AG04450 (cell line): ENCODE measurements at regions of chr12 and their contacts with region 1.

Region 1: GRCh38 chr12:21697904-21698630 is 40.4 kb upstream of the LDHB start:
- DNase-seq: peak; percentile 11
- H3K4me3 ChIP-seq: no peak overlapping the region
- H3K27ac ChIP-seq: no peak overlapping the region
- H3K27me3 ChIP-seq: no peaks in the 10 kb centered on the region
- CTCF ChIP-seq: peak; percentile 60

Region 2: DNA sequence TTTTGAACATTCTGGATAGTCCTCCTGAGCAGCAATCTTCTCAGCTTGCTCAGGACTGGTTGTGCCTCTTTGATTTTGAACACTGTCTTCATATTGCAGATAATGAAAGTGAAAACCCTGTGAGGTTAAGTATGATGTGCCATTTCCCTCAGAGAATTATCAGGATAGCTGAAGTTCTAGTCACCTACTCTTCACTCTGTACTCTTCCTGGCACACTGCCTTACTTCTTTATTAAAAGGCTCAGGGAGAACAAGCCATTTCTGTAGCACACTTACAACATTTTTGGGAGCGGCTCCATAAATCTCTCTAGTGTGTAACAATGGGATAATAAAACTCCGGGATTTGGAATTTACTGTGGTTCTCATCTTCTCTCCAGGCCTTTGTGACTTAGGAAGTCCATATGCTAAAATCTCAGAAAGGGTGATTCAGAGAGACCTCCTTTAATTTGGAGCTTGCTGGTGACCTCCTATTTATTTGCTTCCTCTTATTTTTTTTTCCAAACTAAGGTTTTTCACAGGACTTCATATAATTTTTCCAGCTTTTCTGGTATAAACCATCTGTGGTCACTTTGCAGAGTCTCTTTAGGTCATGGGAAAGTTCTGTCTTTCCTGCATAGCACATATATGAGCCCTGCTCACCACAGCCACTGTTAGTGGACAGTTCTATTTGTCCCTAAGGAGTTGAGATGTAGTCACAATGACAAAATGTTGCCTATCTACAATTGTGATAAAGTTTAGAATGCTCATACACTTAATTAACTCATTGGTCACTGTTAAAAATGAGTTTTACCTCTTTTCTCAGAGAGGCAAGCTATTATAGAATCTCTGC is 13.1 kb after region 1 on chr12:
- CTCF ChIA-PET with region 1: interaction called, 40 read pairs
- POLR2A ChIA-PET with region 1: no interaction called
- DNase-seq: no peak
- H3K4me3 ChIP-seq: no peak overlapping the region
- H3K27ac ChIP-seq: no peak overlapping the region
- H3K27me3 ChIP-seq: no peaks in the 10 kb centered on the region
- CTCF ChIP-seq: no peak

Region 3: DNA sequence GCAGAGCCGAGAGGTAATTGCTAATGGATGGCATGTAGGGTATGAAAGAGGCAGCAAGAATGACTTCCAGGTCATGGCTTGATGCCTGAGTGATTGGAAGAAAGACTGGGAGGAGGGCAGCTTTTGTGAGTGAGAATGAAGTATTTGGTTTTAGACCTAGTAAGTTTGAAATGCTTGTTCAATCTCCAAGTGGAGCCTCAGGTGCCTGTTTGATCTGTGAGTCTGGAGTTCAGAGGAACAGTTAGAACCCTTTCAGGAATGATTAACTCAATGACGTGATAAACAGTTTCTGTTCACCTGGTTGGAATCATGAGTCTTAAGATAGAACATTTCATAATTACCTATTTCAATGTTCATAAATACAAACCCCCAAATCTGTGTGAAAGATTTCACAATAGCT is 66.0 kb after region 1 on chr12:
- CTCF ChIA-PET with region 1: no interaction called
- POLR2A ChIA-PET with region 1: no interaction called
- DNase-seq: no peak
- H3K4me3 ChIP-seq: no peak overlapping the region
- H3K27ac ChIP-seq: no peak overlapping the region
- H3K27me3 ChIP-seq: no peaks in the 10 kb centered on the region
- CTCF ChIP-seq: no peak

Region 4: GRCh38 chr12:21980544-21980943 is 282.5 kb after region 1 on chr12:
- CTCF ChIA-PET with region 1: interaction called, 450 read pairs
- POLR2A ChIA-PET with region 1: no interaction called
- DNase-seq: no peak
- H3K4me3 ChIP-seq: no peak overlapping the region
- H3K27ac ChIP-seq: no peak overlapping the region
- H3K27me3 ChIP-seq: no peaks in the 10 kb centered on the region
- CTCF ChIP-seq: no peak

Region 5: DNA sequence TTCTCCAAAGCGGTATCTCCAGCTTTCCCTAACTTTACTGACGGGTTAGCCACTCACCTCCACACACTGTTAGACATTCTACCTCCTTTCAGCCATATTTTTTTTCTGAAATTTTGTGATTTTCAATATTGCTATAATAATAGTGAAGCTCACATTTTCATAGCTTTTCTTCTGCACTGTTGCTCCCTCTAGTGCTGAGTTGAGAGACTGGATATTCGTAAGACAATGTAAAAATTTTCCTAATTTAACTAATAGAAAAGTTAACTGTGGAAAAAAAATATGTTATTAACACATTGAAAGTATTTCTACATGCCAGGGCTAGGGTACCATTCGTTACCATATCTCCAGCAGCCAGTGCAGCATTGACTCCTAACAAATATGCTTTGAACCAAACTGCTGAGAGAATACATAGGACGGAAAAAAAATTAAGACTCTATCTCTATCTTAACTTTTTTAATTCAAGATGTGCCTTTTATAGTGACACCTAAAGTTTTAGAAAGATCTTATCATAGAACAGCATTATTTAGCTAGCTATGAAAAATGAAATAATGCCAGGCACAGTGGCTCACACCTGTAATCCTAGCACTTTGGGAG is 291.8 kb after region 1 on chr12:
- CTCF ChIA-PET with region 1: interaction called, 450 read pairs
- POLR2A ChIA-PET with region 1: interaction called, 4 read pairs
- DNase-seq: no peak
- H3K4me3 ChIP-seq: no peak overlapping the region
- H3K27ac ChIP-seq: no peak overlapping the region
- H3K27me3 ChIP-seq: no peaks in the 10 kb centered on the region
- CTCF ChIP-seq: peak; percentile 78

Region 6: GRCh38 chr12:22018860-22019259 is 320.8 kb after region 1 on chr12:
- CTCF ChIA-PET with region 1: interaction called, 61 read pairs
- POLR2A ChIA-PET with region 1: no interaction called
- DNase-seq: no peak
- H3K4me3 ChIP-seq: no peak overlapping the region
- H3K27ac ChIP-seq: no peak overlapping the region
- H3K27me3 ChIP-seq: no peaks in the 10 kb centered on the region
- CTCF ChIP-seq: no peak; the same call in 1 of the 2 replicates

Region 7: DNA sequence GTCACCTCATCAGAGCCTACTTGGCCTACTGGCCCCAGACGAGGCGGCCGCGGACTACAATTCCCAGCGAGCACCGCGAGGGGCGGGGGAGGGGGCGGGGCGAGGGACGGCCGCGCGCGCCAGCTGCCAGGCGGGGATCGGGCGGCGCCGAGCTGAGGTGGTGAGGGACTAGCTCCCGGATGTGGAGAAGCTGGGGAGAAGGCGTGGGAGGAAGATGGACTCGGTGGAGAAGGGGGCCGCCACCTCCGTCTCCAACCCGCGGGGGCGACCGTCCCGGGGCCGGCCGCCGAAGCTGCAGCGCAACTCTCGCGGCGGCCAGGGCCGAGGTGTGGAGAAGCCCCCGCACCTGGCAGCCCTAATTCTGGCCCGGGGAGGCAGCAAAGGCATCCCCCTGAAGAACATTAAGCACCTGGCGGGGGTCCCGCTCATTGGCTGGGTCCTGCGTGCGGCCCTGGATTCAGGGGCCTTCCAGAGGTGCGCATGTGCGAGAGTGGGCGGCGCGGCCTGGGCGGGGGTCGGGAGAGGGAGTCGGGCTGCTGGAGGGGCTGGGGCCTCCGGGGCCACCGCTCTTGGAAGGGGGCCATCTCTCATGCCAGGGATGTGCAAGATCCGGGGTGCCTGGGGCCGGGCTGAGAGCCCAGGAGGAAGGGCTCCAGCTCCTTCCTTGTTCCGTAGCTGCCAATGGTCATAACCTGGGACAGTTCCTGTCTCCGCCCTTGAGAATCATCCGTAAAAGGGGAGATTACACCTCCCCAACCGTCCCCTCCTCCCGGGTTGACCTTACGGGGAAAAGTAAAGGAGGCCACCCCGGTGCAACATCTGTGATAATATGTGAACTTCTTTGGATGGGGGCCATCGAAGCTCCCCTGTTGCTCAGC is 348.3 kb after region 1 on chr12 and contains the start of gene CMAS:
- CTCF ChIA-PET with region 1: interaction called, 21 read pairs
- POLR2A ChIA-PET with region 1: no interaction called
- DNase-seq: peak; percentile 15
- H3K4me3 ChIP-seq: peak within 1 kb of the TSS; percentile 84
- H3K27ac ChIP-seq: peak within 1 kb of the TSS; percentile 50
- H3K27me3 ChIP-seq: no peaks in the 10 kb centered on the region
- CTCF ChIP-seq: no peak
- polyA plus RNA-seq, gene CMAS: 22.4 and 31.7 TPM in 2 replicates

Region 8: DNA sequence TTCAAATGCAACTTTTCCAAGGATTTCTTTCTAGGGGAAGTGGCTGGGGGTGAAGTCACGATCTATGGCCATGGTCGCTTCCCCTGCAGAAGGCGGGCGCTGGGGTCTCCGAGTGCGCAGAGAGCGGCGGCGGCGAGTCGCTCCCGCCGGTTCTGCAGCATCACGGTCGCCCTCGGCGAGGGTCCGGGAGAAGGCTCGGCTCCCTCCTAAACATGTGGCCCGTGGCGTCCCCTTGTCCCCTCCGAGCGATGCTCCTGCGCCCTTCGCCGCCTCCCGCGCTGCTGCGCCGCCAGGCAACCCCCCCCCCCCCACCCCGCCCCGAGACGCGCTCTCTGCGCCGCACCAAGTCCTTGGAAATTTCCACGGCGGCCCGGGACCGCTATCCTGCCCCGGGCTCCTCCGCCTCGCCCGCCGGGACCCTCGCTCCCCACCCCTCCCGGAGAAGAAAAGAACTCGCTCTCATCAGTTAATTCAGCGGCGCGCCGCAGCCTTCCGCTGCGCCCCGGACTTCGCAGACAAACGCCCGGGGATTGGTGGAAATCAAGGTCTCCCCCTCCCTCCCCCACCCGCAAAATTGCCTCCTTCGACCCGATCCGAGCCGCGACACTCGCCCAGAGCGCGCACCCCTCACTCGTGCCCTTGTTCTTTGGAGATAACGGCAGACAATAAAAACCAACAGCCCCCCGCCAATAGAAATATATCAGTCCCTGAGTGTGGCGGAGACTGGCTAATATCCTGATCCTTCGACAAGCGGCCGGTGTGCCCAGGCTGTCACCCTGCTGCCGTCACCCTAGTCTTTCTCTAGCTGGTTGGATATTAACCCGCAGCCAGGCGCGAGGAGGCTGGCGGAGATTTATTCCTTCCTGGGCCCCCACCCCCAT is 636.6 kb after region 1 on chr12 and contains the start of gene ST8SIA1:
- CTCF ChIA-PET with region 1: interaction called, 14 read pairs
- POLR2A ChIA-PET with region 1: no interaction called
- DNase-seq: no peak
- H3K4me3 ChIP-seq: peak within 1 kb of the TSS; percentile 66
- H3K27ac ChIP-seq: no peak within 1 kb of the TSS
- H3K27me3 ChIP-seq: peaks cover 36% of the 10 kb centered on the region
- CTCF ChIP-seq: no peak
- polyA plus RNA-seq, gene ST8SIA1: 0.04 and 0.26 TPM in 2 replicates